Panc1 (cell line): ENCODE measurements at regions of chr7 and their contacts with region 1.

Region 1: GRCh38 chr7:121382473-121382872 is 13.6 kb downstream of the FAM3C start:
- DNase-seq: no peak
- ATAC-seq: no peak
- H3K4me3 ChIP-seq: no peak overlapping the region
- H3K27ac ChIP-seq: no peak overlapping the region
- H3K4me1 ChIP-seq: peaks cover 5% of the 10 kb centered on the region; the same call in 1 of the 2 replicates
- H3K27me3 ChIP-seq: no peaks in the 10 kb centered on the region
- CTCF ChIP-seq: no peak

Region 2: DNA sequence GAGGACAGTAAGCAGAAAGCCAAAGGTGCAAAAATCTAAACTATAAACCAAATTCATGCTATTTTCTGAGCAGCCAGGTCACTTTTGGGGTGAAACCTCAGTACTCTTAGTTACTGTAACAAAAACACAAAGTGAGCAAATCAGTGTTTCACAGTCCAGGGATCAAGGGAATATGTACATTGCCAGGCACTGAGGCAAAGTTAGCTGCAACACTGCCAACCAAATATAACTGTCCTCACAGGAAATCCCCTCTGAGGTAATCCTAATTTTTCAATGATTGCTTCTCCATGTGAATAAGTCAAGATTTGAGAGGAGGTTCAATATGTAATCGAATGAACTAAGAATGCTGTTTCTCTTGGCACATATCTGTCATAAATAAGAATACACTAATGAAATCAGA is 754.2 kb before region 1 on chr7:
- CTCF ChIA-PET with region 1: interaction called, 13 read pairs
- POLR2A ChIA-PET with region 1: no interaction called
- in situ Hi-C with region 1: no loop called
- intact Hi-C with region 1: no loop called
- DNase-seq: no peak
- ATAC-seq: no peak
- H3K4me3 ChIP-seq: no peak overlapping the region
- H3K27ac ChIP-seq: no peak overlapping the region
- H3K4me1 ChIP-seq: no peaks in the 10 kb centered on the region
- H3K27me3 ChIP-seq: no peaks in the 10 kb centered on the region
- CTCF ChIP-seq: no peak

Region 3: DNA sequence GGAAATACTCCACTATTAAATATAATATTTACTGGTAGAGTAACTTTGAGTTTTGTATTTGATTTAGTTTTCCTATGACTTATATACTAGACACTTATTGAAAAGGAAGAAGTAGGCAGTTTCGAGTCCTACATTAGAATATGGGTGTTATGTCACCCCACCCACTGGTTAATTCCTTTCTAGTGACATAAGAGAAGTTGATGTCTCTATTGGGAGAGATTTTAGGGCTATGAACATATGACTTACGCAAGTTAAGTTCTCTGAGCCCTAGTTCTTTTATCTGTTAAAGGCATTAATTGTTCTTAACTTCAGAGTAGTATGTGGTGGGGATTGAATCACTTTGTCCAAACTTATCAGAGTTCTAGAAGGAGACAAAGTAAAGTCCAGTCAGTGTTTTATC is 363.5 kb before region 1 on chr7:
- CTCF ChIA-PET with region 1: no interaction called
- POLR2A ChIA-PET with region 1: no interaction called
- in situ Hi-C with region 1: no loop called
- intact Hi-C with region 1: no loop called
- DNase-seq: no peak
- ATAC-seq: no peak
- H3K4me3 ChIP-seq: no peak overlapping the region
- H3K27ac ChIP-seq: no peak overlapping the region
- H3K4me1 ChIP-seq: no peaks in the 10 kb centered on the region
- H3K27me3 ChIP-seq: peaks cover 5% of the 10 kb centered on the region; the same call in 1 of the 2 replicates
- CTCF ChIP-seq: no peak

Region 4: GRCh38 chr7:122027058-122027457 is 644.6 kb after region 1 on chr7:
- CTCF ChIA-PET with region 1: interaction called, 15 read pairs
- POLR2A ChIA-PET with region 1: no interaction called
- in situ Hi-C with region 1: no loop called
- intact Hi-C with region 1: no loop called
- DNase-seq: no peak
- ATAC-seq: no peak
- H3K4me3 ChIP-seq: no peak overlapping the region
- H3K27ac ChIP-seq: no peak overlapping the region
- H3K4me1 ChIP-seq: no peaks in the 10 kb centered on the region
- H3K27me3 ChIP-seq: no peaks in the 10 kb centered on the region
- CTCF ChIP-seq: no peak